ENCODE measurements at regions of chr1 and their contacts with region 1.

Region 1: GRCh38 chr1:36149237-36149972 is at the start of gene TRAPPC3:
- DNase-seq: peak; percentile 99
- H3K4me3 Mint-ChIP-seq: peak within 1 kb of the TSS; percentile 92
- H3K27ac Mint-ChIP-seq: peak within 1 kb of the TSS; percentile 94
- H3K4me1 Mint-ChIP-seq: peaks cover 50% of the 10 kb centered on the region
- H3K27me3 Mint-ChIP-seq: no peaks in the 10 kb centered on the region
- total RNA-seq, gene TRAPPC3: 68.4 and 71.5 TPM in 2 replicates

Region 2: GRCh38 chr1:36160949-36161485 is 11.6 kb after region 1 on chr1:
- intact Hi-C with region 1: loop called (anchors 1 kb)
- DNase-seq: peak; percentile 68
- H3K4me3 Mint-ChIP-seq: peak overlapping the region; percentile 77
- H3K27ac Mint-ChIP-seq: peak overlapping the region; percentile 93
- H3K4me1 Mint-ChIP-seq: peaks cover 59% of the 10 kb centered on the region
- H3K27me3 Mint-ChIP-seq: no peaks in the 10 kb centered on the region

Region 3: GRCh38 chr1:36172983-36173382 is 23.6 kb after region 1 on chr1:
- intact Hi-C with region 1: no loop called
- DNase-seq: no peak
- H3K4me3 Mint-ChIP-seq: no peak overlapping the region
- H3K27ac Mint-ChIP-seq: no peak overlapping the region
- H3K4me1 Mint-ChIP-seq: peaks cover 7% of the 10 kb centered on the region
- H3K27me3 Mint-ChIP-seq: no peaks in the 10 kb centered on the region

Region 4: DNA sequence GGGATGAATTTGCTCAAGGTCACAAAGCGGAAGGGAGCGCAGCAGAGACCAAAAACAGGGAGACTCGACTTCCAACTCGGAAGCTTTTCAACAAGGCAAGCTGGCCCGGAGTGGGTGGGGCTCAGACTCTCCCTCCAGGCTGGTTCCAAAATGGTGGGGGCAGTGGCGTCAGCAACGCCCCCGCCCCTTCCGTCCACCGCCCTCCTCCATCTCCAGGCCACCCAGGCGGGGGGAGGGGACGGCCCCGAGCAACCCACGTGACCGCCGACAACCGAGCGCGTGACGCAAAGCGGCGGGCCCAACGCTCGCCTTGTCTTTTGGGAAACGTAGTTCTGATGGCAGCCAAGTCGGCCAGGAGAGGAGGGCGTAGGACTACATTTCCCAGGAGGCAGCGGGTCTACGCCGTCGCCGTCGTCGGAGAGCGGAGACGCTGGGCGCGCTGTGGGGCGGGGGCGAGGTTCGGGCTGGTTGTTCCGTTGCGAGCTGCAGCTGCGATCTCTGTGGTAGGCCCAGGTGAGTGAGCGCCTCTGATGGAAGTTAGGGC is 74.7 kb after region 1 on chr1 and contains the start of gene THRAP3:
- intact Hi-C with region 1: loop called (anchors 1 kb)
- DNase-seq: peak; percentile 100
- H3K4me3 Mint-ChIP-seq: peak within 1 kb of the TSS; percentile 96
- H3K27ac Mint-ChIP-seq: peak within 1 kb of the TSS; percentile 100
- H3K4me1 Mint-ChIP-seq: peaks cover 24% of the 10 kb centered on the region
- H3K27me3 Mint-ChIP-seq: no peaks in the 10 kb centered on the region
- total RNA-seq, gene THRAP3: 159 and 164 TPM in 2 replicates

Region 5: DNA sequence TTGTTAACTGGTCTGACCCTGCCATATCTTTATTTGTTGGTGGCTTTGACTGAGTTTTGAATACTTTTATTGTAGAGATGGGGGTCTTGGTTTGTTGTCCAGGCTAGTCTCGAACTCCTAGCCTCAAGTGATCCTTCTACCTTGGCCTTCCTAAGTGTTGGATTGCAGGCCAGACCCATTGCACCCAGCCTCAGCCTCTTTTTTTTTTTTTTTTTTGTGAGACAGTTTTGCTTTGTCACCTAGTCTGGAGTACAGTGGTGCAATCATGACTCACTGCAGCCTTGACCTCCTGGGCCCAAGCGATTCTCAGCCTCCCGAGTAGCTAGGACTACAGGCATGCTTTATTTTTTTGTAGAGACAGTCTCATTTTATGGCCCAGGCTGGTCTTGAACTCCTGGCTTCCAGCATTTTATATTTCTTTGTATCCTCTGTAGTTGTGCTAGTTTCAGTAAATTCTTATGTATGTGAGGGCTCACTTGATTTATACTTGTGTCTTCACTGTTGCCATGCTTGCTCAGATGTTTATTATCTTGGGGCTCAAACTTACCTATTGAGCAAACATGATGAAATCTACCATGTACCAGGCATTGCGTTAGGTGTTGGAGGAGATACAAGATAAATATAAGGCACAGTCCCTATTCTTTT is 99.0 kb after region 1 on chr1:
- intact Hi-C with region 1: no loop called
- DNase-seq: no peak
- H3K4me3 Mint-ChIP-seq: no peak overlapping the region
- H3K27ac Mint-ChIP-seq: peak overlapping the region; percentile 72
- H3K4me1 Mint-ChIP-seq: peaks cover 26% of the 10 kb centered on the region
- H3K27me3 Mint-ChIP-seq: no peaks in the 10 kb centered on the region

Region 6: GRCh38 chr1:36306902-36307456 is 157.6 kb after region 1 on chr1:
- intact Hi-C with region 1: loop called (anchors 2 kb)
- DNase-seq: peak; percentile 93
- H3K4me3 Mint-ChIP-seq: peak overlapping the region; percentile 99
- H3K27ac Mint-ChIP-seq: peak overlapping the region; percentile 95
- H3K4me1 Mint-ChIP-seq: peaks cover 37% of the 10 kb centered on the region
- H3K27me3 Mint-ChIP-seq: no peaks in the 10 kb centered on the region

Region 7: DNA sequence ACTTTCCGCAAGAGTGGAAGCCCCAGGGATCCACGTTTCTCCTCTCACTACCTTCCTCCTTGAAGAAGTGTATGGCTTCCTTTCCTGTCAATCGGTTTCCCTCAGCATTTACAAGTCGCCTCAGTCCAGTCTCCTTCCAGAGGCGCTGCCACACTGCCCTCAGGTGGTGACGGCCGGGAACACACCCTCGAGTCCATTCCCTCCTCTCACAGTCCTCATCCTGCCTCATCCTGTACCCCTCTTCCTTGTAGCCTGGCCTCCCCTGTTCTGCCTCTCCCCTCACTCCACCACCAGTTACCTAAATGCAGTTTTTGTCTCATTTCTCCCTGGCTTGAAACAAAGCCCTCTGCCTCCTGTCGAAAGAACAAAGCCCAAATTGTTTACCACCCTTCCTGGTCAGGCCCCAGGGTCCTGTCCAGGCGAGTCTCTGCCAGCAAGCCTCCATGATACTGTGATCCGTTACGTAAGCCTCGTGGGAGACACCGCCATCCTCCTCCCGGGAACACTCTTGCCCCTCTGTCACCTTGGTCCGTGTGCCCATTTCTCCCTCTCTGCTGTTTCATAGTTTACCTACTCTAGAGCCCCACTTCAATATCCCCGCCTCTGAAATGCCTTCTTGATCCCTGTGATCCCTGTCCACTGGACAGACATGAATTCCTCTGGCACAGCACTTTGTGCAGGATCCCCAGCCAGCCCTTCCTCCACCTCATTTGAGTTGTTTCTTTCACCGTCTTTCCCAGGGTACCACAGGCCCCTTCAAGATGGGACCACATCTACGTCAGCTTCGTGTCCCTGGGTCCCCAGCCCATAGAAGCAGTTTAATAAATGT is 271.6 kb after region 1 on chr1:
- intact Hi-C with region 1: loop called (anchors 10 kb)
- DNase-seq: peak; percentile 82
- H3K4me3 Mint-ChIP-seq: no peak overlapping the region
- H3K27ac Mint-ChIP-seq: peak overlapping the region; percentile 53
- H3K4me1 Mint-ChIP-seq: peaks cover 12% of the 10 kb centered on the region
- H3K27me3 Mint-ChIP-seq: no peaks in the 10 kb centered on the region